ENCODE measurements at regions of chr9 and their contacts with region 1.

Region 1: DNA sequence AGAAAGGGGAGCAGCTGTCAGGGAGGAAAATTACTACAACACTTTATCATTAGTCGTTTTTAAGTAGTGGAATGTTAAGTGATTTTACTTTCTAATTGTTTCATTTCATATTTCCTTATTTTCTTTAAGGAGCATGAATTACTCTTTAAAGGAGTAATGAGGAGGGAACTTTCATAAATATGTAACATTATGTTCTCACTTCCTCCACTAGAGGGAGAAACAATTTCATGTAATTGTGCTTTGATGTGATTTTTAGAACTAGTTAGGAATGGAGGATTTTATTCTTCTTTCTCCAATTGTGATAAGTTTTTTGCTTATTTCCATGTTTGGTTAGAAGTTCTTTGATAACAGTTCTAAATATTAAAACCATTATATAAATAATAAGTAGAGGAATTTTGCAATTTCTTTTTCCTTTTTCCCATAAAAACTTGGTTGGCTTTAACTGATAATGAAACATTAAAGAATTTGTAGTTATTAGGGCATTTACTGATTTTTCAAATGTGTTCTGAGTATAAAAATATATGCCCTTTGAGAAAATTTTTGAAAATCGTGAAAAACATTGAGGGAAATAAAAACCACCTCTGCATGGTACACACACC is 25.6 kb downstream of the CEP78 start:
- DNase-seq: no peak
- ATAC-seq: no peak
- H3K4me3 Mint-ChIP-seq: no peak overlapping the region
- H3K27ac Mint-ChIP-seq: no peak overlapping the region
- H3K4me1 Mint-ChIP-seq: no peaks in the 10 kb centered on the region
- H3K27me3 Mint-ChIP-seq: no peaks in the 10 kb centered on the region
- CTCF ChIP-seq: peak; percentile 28; the same call in 1 of the 2 replicates

Region 2: DNA sequence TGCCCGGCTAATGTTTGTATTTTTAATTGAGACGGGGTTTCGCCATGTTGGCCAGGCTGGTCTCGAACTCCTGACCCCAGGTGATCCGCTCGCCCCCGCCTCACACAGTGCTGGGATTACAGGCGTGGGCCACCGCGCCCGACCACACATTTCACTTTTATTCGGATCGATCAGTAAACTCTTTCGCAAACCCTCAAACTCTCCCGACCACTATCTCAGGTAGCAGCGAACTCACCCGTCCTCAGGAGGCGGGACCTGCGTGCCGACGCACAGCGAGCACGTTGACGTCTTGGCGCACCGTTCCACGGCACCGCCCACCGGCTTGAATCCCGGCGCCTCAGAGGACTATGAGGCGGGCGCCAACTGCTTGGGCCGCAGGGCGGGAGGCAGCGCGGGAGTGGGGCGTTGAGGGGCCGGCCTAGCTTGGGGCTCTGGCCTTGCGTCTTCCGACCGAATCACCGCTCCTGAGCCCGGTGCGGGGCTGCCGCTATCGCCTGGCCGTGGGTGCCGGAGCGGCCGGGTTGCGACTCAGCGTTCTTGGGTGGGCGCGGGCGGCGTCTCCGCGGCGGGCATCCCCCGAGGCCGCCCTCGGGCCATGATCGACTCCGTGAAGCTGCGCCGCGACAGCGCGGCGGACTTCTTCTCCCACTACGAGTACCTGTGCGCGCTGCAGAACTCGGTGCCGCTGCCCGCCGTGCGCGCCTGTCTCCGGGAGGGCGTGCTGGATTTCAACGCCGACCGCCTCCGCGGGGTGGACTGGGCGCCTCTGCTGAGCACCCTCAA is 25.6 kb before region 1 on chr9 and contains the start of gene CEP78:
- CTCF ChIA-PET with region 1: no interaction called
- POLR2A ChIA-PET with region 1: interaction called, 10 read pairs
- DNase-seq: peak; percentile 94
- ATAC-seq: peak; percentile 97
- H3K4me3 Mint-ChIP-seq: no peak within 1 kb of the TSS; the same call in 1 of the 2 replicates
- H3K27ac Mint-ChIP-seq: peak within 1 kb of the TSS; percentile 99
- H3K4me1 Mint-ChIP-seq: peaks cover 17% of the 10 kb centered on the region
- H3K27me3 Mint-ChIP-seq: no peaks in the 10 kb centered on the region
- CTCF ChIP-seq: no peak
- total RNA-seq, gene CEP78: 42.0 to 44.1 TPM (median 44.0 TPM) in 3 replicates